ENCODE measurements at regions of chr1 and their contacts with region 1.

Region 1: DNA sequence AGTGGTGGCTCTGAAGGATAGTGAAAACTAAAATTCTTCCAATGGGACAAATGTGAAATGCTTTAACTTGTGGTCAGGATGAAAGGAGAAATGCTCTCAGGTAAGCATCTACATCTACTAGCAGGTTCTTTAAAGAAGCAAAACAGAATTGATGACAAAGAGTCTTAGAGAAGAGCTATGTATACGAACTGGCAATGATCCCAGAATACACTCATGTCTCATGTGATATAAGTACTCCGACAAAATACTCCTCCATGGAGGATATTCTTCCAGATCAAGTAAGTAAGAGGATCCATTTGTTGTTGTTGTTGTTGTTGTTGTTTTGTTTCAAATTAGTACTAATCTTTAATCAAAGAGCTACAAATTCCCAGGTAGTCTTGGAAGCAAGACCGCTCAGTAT is 174.0 kb upstream of the ATP1B1 start:
- DNase-seq: peak; percentile 31
- ATAC-seq: no peak
- H3K4me3 ChIP-seq: no peak overlapping the region
- H3K27ac ChIP-seq: no peak overlapping the region
- H3K4me1 ChIP-seq: no peaks in the 10 kb centered on the region
- H3K27me3 ChIP-seq: no peaks in the 10 kb centered on the region
- CTCF ChIP-seq: no peak
- POLR2A ChIP-seq: no peak
- RAD21 ChIP-seq: no peak

Region 2: GRCh38 chr1:168348146-168348709 is 584.3 kb before region 1 on chr1:
- CTCF ChIA-PET with region 1: no interaction called
- POLR2A ChIA-PET with region 1: no interaction called
- dilution Hi-C with region 1: no loop called
- in situ Hi-C with region 1: no loop called
- intact Hi-C with region 1: loop called (anchors 5 kb)
- DNase-seq: no peak
- ATAC-seq: no peak
- H3K4me3 ChIP-seq: peak overlapping the region; percentile 39; the same call in 1 of the 2 replicates
- H3K27ac ChIP-seq: no peak overlapping the region
- H3K4me1 ChIP-seq: no peaks in the 10 kb centered on the region
- H3K27me3 ChIP-seq: no peaks in the 10 kb centered on the region
- CTCF ChIP-seq: no peak
- POLR2A ChIP-seq: no peak
- RAD21 ChIP-seq: no peak

Region 3: GRCh38 chr1:168531615-168532345 is 400.8 kb before region 1 on chr1:
- CTCF ChIA-PET with region 1: no interaction called
- POLR2A ChIA-PET with region 1: no interaction called
- dilution Hi-C with region 1: no loop called
- in situ Hi-C with region 1: no loop called
- intact Hi-C with region 1: no loop called
- DNase-seq: no peak
- ATAC-seq: no peak
- H3K4me3 ChIP-seq: no peak overlapping the region
- H3K27ac ChIP-seq: no peak overlapping the region
- H3K4me1 ChIP-seq: no peaks in the 10 kb centered on the region
- H3K27me3 ChIP-seq: no peaks in the 10 kb centered on the region
- CTCF ChIP-seq: no peak
- POLR2A ChIP-seq: no peak
- RAD21 ChIP-seq: no peak

Measured in IMR-90 (cell line).